Gastrocnemius medialis (tissue), 4 donors: ENCODE measurements at regions of chr6 and their contacts with region 1.

Region 1: DNA sequence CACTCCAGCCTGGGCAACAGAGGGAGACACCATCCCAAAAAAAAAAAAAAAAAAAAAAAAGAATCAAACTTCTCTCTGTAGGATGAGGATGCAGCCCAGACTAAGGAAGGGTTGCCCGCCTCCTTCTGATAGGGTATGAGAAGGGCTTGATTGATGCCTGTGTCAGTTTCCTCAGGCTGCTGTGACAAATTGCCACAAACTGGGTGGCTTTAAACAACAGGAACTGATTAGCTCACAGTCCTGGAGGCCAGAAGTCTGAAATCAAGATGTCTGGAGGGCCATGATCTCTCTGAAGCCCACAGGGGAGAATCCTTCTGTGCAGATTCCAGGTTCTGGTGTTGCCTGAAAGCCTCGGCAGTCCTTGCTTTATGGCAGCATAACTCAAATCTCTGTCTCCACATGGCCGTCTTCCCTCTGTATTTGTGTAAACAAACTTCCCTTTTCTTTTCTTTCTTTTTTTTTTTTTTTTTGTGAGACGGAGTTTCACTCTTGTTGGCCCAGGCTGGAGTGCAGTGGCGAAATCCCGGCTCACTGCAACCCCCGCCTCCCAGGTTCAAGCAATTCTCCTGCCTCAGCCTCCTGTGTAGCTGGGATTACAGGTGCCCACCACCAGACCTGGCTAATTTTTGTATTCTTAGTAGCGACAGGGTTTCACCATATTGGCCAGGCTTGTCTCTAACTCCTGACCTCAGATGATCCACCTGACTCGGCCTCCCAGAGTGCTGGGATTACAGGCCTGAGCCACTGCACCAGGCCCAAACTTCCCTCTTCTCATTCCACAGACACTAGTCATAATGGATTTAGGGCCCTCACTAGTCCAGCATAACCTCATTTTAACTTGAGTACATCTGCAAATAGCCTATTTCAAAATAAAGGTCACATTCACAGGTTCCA is 11.2 kb upstream of the CDK19 start:
- DNase-seq: peak in 1 of 2 donors; percentile 23
- ATAC-seq: peak; percentile 33 to 56
- H3K4me3 ChIP-seq: no peak overlapping the region
- H3K27ac ChIP-seq: peak overlapping the region in 2 of 4 donors; percentile 38 to 48
- H3K4me1 ChIP-seq: peaks cover 0 to 7% of the 10 kb centered on the region in 2 donors
- H3K27me3 ChIP-seq: no peaks in the 10 kb centered on the region
- CTCF ChIP-seq: no peak
- POLR2A ChIP-seq: no peak

Region 2: DNA sequence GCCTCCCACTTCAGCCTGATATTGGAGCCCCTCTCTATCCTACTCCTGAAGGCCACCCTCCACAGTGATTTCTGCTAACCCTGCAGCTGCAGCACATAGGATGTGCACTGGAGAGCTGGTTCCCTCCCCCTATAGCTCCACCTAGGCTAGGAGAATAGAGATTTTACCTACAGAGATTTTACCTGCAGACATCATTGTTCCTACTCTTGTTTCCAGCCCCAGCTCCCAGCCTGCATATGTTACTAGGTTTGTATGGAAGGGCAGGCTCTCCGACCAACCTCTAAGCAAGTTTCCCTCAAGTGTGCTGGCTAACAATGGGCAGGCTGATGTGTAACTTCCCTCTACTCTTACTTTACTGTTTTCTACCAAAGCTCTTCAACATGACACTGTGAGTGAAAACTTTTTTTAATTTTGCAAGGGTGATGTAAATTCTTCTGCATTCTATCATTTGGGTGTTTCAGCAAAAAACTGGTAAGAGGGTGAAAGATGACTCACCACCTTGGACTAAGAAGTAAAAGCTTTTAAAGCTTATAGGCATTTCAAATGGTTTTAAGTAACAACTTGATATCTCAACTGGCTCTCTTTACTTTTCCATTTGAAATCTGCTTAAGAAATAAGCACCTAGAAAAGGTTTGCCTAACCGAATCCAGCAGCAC is 118.1 kb before region 1 on chr6:
- in situ Hi-C with region 1: no loop called
- intact Hi-C with region 1: no loop called
- DNase-seq: no peak
- ATAC-seq: no peak
- H3K4me3 ChIP-seq: no peak overlapping the region
- H3K27ac ChIP-seq: no peak overlapping the region
- H3K4me1 ChIP-seq: no peaks in the 10 kb centered on the region
- H3K27me3 ChIP-seq: no peaks in the 10 kb centered on the region
- CTCF ChIP-seq: no peak
- POLR2A ChIP-seq: no peak

Region 3: GRCh38 chr6:110864824-110865223 is 38.3 kb after region 1 on chr6:
- in situ Hi-C with region 1: loop called in 1 of 4 experiments (anchors 5 kb)
- intact Hi-C with region 1: no loop called
- DNase-seq: no peak
- ATAC-seq: no peak
- H3K4me3 ChIP-seq: no peak overlapping the region
- H3K27ac ChIP-seq: no peak overlapping the region
- H3K4me1 ChIP-seq: no peaks in the 10 kb centered on the region
- H3K27me3 ChIP-seq: no peaks in the 10 kb centered on the region
- CTCF ChIP-seq: no peak
- POLR2A ChIP-seq: no peak

Region 4: GRCh38 chr6:110981202-110981600 is 154.7 kb after region 1 on chr6:
- in situ Hi-C with region 1: no loop called
- intact Hi-C with region 1: no loop called
- DNase-seq: no peak
- ATAC-seq: no peak
- H3K4me3 ChIP-seq: peak overlapping the region; percentile 90 to 96 (median 93)
- H3K27ac ChIP-seq: peak overlapping the region; percentile 79 to 94 (median 89)
- H3K4me1 ChIP-seq: peaks cover 0 to 9% of the 10 kb centered on the region in 2 donors
- H3K27me3 ChIP-seq: no peaks in the 10 kb centered on the region
- CTCF ChIP-seq: no peak
- POLR2A ChIP-seq: no peak